ENCODE measurements at regions of chr16 and their contacts with region 1.

Region 1: GRCh38 chr16:67104061-67104460 is 5.7 kb upstream of the PHAF1 start:
- DNase-seq: peak; percentile 14 to 48 (median 45)
- H3K4me3 ChIP-seq: no peak overlapping the region
- H3K27ac ChIP-seq: no peak overlapping the region
- H3K4me1 ChIP-seq: peaks cover 2 to 8% (median 5%) of the 10 kb centered on the region in 4 experiments
- H3K27me3 ChIP-seq: no peaks in the 10 kb centered on the region

Region 2: GRCh38 chr16:66977341-66978113 is 126.5 kb before region 1 on chr16:
- CTCF ChIA-PET with region 1: interaction called, 53 read pairs
- POLR2A ChIA-PET with region 1: no interaction called
- DNase-seq: peak; percentile 75 to 90 (median 89)
- H3K4me3 ChIP-seq: no peak overlapping the region
- H3K27ac ChIP-seq: no peak overlapping the region
- H3K4me1 ChIP-seq: peaks cover 0 to 1% (median 0%) of the 10 kb centered on the region in 4 experiments
- H3K27me3 ChIP-seq: peaks cover 0 to 5% (median 0%) of the 10 kb centered on the region in 5 experiments

Region 3: DNA sequence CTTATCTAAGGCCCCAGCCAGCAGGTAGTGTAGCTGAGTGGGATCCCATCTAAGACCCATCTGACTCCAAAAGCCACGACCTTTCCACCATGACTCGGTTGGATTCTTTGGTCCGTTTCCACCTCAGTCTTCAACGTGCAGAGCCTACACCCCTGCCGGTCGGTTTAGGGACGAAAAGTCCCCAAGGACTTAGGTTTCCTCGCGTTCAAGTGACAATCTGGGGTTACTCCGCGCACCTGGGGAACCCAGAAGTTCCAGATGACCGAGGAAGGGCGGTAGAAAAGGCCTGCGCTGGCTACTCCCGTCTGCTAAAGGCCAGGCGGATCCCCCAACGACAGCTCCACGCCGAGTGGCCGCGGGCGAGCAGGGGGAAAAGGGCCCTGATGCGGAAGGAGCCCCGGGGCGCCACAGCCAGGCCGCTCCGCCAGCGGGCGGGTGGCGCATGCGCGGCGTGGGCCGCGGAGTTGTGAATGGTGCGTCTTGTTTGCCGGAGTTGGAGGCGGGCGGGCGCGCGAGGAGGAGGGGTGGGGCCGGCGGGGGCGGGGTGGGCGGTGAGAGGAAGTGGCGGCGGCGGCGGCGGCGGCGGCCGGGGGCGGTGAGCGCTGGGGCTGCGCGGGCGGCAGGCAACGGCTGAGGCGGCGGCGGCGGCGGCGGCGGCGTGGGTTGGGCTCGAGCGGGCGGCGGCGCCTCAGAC is 75.4 kb before region 1 on chr16 and contains the start of gene CBFB:
- CTCF ChIA-PET with region 1: interaction called, 206 read pairs
- POLR2A ChIA-PET with region 1: no interaction called
- DNase-seq: peak; percentile 94 to 96 (median 96)
- H3K4me3 ChIP-seq: peak within 1 kb of the TSS; percentile 77 to 98 (median 88)
- H3K27ac ChIP-seq: peak within 1 kb of the TSS; percentile 90 to 96
- H3K4me1 ChIP-seq: peaks cover 16 to 33% (median 29%) of the 10 kb centered on the region in 4 experiments
- H3K27me3 ChIP-seq: no peaks in the 10 kb centered on the region

Region 4: GRCh38 chr16:67086822-67087221 is 17.2 kb before region 1 on chr16:
- CTCF ChIA-PET with region 1: interaction called, 12 read pairs
- POLR2A ChIA-PET with region 1: no interaction called
- DNase-seq: no peak
- H3K4me3 ChIP-seq: no peak overlapping the region
- H3K27ac ChIP-seq: no peak overlapping the region
- H3K4me1 ChIP-seq: peaks cover 0 to 9% (median 0%) of the 10 kb centered on the region in 4 experiments
- H3K27me3 ChIP-seq: no peaks in the 10 kb centered on the region

Region 5: DNA sequence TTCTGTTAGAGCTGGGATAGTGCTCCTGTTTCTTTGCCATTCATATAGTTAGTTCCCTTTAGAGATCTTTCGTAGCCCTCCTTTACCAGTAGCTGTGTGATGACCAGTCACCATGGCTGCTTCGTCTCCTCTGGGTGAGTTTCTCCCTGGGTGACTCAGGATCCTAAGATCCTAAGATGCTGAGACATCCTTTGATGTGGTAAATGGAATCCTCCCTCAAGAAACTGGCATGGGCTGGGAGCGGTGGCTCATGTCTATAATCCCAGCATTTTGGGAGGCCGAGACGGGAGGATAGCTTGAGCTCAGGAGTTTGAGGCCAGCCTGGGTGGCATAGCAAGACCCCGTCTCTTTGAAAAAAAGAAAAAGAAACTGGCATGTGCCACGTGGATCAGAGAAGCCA is 11.6 kb after region 1 on chr16:
- CTCF ChIA-PET with region 1: interaction called, 30 read pairs
- POLR2A ChIA-PET with region 1: no interaction called
- DNase-seq: no peak
- H3K4me3 ChIP-seq: no peak overlapping the region
- H3K27ac ChIP-seq: no peak overlapping the region
- H3K4me1 ChIP-seq: peaks cover 7 to 25% (median 17%) of the 10 kb centered on the region in 4 experiments
- H3K27me3 ChIP-seq: no peaks in the 10 kb centered on the region

Measured in common myeloid progenitor, CD34-positive (primary cell).